HepG2 (cell line): ENCODE measurements at regions of chr6 and their contacts with region 1.

Region 1: GRCh38 chr6:29737707-29738630 is 14.7 kb downstream of the HLA-F start:
- DNase-seq: peak; percentile 75
- ATAC-seq: peak; percentile 96
- H3K4me3 ChIP-seq: no peak overlapping the region
- H3K27ac ChIP-seq: no peak overlapping the region
- H3K4me1 ChIP-seq: peaks cover 14% of the 10 kb centered on the region
- H3K27me3 ChIP-seq: no peaks in the 10 kb centered on the region
- CTCF ChIP-seq: peak; percentile 96
- EP300 ChIP-seq: no peak
- POLR2A ChIP-seq: no peak
- RAD21 ChIP-seq: peak; percentile 88

Region 2: DNA sequence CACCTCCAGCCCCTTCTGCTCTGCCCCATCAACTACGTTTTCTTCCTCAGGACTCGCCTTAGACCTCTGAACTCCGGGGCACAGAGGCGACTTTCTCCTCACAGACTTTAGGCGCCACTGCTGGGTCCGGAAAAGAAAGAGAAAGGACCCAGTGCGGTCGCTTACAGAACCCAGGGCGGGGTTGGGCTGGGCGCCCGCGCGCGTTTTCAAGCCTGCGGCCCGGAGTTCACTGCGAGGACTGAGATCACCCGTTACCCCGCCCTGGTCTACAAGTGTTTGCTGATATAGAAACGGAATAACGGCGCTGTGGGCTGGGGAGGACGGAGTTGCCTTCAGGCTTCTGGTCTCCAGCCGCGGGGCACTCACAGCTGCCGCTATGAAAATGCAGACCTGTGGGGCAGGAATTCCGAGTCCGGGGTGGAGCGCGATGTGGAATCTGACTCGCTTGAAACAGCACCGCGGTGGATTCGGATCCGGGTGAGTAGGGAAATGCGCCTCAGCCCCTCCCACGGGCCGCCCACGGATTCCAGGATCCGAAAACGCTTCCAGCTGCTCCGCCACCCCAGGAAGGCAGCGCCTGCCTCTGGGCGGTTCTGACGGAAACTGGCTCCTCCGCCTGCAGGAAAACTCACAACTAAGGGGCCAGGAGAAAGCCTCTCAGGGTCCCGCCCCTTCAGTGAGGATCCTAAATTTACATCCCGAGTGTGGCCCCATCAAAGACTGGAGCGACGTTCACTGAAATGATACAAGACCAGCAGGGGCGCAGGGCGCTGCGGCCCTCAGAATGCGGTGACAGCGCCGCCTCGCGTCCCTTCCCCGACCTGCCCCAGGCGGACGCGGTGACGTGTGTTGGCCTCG is 14.7 kb after region 1 on chr6:
- CTCF ChIA-PET with region 1: interaction called, 48 read pairs
- POLR2A ChIA-PET with region 1: no interaction called
- in situ Hi-C with region 1: no loop called
- intact Hi-C with region 1: loop called (anchors 1 kb)
- DNase-seq: peak; percentile 80
- ATAC-seq: peak; percentile 83
- H3K4me3 ChIP-seq: peak overlapping the region; percentile 67 to 85 (median 77)
- H3K27ac ChIP-seq: no peak overlapping the region
- H3K4me1 ChIP-seq: peaks cover 23% of the 10 kb centered on the region
- H3K27me3 ChIP-seq: peaks cover 0 to 24% of the 10 kb centered on the region in 2 experiments; a peak in 1 of 5 replicates
- CTCF ChIP-seq: peak; percentile 97
- EP300 ChIP-seq: no peak
- POLR2A ChIP-seq: no peak; a peak in 1 of 4 replicates
- RAD21 ChIP-seq: peak; percentile 91

Region 3: DNA sequence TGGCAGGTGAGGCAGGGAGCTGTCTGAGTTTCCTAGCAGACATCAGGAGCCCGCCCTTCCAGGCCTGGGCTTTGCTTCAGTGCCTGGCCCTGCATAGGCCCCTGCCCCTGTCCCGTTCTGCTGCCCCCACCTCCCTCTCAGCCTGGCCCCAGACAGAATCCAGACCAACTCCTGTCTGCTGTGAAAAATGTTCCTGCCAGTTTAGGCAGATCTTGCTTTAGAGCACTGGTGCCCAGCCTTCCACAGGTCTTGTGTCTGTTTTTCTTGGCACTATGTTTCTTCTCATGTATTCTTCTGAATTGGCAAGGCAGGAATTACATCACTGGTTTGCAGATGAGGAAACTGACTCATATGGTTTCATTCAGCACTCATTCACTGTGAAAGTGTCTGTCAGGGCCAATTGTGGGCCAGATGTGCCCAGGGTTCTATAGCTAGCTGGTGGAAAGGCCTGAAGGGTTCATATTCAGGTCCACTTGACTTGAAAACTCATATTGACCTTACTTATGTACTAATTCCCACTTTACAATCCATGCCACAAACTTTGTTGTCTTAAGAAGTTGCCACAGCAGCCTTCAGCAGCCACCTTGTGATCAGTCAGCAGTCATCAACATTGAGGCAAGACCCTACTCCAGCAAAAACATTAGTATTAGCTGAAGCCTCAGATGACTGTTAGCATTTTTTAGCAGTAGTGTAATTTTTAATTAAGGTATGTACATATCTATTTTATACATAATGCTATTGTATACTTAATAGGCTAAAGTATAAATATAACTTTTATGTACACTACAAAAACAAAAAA is 25.7 kb after region 1 on chr6:
- CTCF ChIA-PET with region 1: no interaction called
- POLR2A ChIA-PET with region 1: no interaction called
- in situ Hi-C with region 1: no loop called
- intact Hi-C with region 1: no loop called
- DNase-seq: no peak
- ATAC-seq: no peak
- H3K4me3 ChIP-seq: no peak overlapping the region
- H3K27ac ChIP-seq: no peak overlapping the region
- H3K4me1 ChIP-seq: no peaks in the 10 kb centered on the region
- H3K27me3 ChIP-seq: peaks cover 0 to 25% of the 10 kb centered on the region in 2 experiments; a peak in 3 of 5 replicates
- CTCF ChIP-seq: no peak
- EP300 ChIP-seq: no peak
- POLR2A ChIP-seq: no peak
- RAD21 ChIP-seq: no peak

Region 4: DNA sequence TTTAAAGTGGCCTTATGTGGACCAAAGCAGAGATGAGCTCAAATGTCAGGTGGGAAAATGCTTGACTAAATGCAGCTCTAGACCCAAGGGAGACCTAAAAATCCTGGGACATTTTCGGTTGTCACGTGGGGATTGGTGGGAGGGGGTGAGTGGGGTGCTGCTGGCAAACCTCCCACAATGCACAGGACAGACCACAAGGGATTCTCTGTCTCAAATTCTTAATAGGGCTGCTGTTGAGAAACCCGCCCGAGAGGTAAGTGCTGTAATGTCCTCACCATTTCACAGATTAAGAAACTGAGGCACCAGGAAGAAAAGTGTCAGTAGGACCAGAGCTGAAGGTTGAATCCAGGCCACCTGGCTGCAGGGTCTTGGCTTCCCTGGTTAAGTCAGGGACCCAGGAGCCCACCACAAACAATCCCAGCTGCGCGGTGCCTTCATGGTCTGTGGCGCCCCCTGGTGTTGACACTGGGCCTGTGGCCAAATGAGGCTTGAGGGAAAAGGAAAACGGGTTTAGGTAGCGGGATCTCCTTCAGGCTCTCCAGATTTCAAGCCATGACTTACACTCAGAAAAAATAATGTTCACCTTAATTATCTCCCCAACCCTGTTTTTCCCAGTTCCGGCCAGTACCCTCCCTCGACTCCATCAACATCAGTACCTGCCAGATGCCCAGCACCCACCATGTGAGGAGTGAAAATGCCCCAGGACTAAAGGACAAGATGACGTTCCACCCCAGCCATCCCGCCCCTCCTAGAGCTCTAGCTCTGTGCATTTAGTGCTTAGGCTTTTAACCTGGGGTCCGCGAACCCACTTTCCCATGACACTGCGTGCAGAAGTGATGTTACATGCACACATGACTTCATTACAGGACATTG is 96.8 kb after region 1 on chr6:
- CTCF ChIA-PET with region 1: interaction called, 67 read pairs
- POLR2A ChIA-PET with region 1: no interaction called
- in situ Hi-C with region 1: loop called (anchors 5 kb)
- intact Hi-C with region 1: no loop called
- DNase-seq: no peak
- ATAC-seq: peak; percentile 74
- H3K4me3 ChIP-seq: no peak overlapping the region
- H3K27ac ChIP-seq: no peak overlapping the region
- H3K4me1 ChIP-seq: no peaks in the 10 kb centered on the region
- H3K27me3 ChIP-seq: peaks cover 0 to 3% of the 10 kb centered on the region in 2 experiments; a peak in 1 of 5 replicates
- CTCF ChIP-seq: peak; percentile 89
- EP300 ChIP-seq: no peak
- POLR2A ChIP-seq: no peak
- RAD21 ChIP-seq: peak; percentile 61

Region 5: GRCh38 chr6:30013291-30013922 is 275.4 kb after region 1 on chr6:
- CTCF ChIA-PET with region 1: interaction called, 6 read pairs
- POLR2A ChIA-PET with region 1: no interaction called
- in situ Hi-C with region 1: loop called (anchors 10 kb)
- intact Hi-C with region 1: loop called (anchors 1 kb)
- DNase-seq: peak; percentile 17
- ATAC-seq: peak; percentile 85
- H3K4me3 ChIP-seq: no peak overlapping the region
- H3K27ac ChIP-seq: no peak overlapping the region
- H3K4me1 ChIP-seq: no peaks in the 10 kb centered on the region
- H3K27me3 ChIP-seq: no peaks in the 10 kb centered on the region
- CTCF ChIP-seq: peak; percentile 77
- EP300 ChIP-seq: no peak
- POLR2A ChIP-seq: no peak
- RAD21 ChIP-seq: peak; percentile 54

Region 6: GRCh38 chr6:31580807-31581433 is 1843.0 kb after region 1 on chr6:
- CTCF ChIA-PET with region 1: no interaction called
- POLR2A ChIA-PET with region 1: no interaction called
- in situ Hi-C with region 1: no loop called
- intact Hi-C with region 1: no loop called
- DNase-seq: peak; percentile 61
- ATAC-seq: peak; percentile 94
- H3K4me3 ChIP-seq: peak overlapping the region; percentile 67 to 88 (median 78)
- H3K27ac ChIP-seq: no peak overlapping the region
- H3K4me1 ChIP-seq: peaks cover 25% of the 10 kb centered on the region
- H3K27me3 ChIP-seq: peaks cover 10 to 65% of the 10 kb centered on the region in 2 experiments; a peak in 4 of 5 replicates
- CTCF ChIP-seq: peak; percentile 95
- EP300 ChIP-seq: no peak
- POLR2A ChIP-seq: peak in 1 of 2 experiments; percentile 53; a peak in 1 of 4 replicates
- RAD21 ChIP-seq: peak; percentile 90